GM13977 (cell line): ENCODE measurements at regions of chr14 and their contacts with region 1.

Region 1: GRCh38 chr14:22386924-22387775 is 201.9 kb downstream of the DAD1 start:
- DNase-seq: peak; percentile 67
- CTCF ChIP-seq: peak; percentile 81

Region 2: DNA sequence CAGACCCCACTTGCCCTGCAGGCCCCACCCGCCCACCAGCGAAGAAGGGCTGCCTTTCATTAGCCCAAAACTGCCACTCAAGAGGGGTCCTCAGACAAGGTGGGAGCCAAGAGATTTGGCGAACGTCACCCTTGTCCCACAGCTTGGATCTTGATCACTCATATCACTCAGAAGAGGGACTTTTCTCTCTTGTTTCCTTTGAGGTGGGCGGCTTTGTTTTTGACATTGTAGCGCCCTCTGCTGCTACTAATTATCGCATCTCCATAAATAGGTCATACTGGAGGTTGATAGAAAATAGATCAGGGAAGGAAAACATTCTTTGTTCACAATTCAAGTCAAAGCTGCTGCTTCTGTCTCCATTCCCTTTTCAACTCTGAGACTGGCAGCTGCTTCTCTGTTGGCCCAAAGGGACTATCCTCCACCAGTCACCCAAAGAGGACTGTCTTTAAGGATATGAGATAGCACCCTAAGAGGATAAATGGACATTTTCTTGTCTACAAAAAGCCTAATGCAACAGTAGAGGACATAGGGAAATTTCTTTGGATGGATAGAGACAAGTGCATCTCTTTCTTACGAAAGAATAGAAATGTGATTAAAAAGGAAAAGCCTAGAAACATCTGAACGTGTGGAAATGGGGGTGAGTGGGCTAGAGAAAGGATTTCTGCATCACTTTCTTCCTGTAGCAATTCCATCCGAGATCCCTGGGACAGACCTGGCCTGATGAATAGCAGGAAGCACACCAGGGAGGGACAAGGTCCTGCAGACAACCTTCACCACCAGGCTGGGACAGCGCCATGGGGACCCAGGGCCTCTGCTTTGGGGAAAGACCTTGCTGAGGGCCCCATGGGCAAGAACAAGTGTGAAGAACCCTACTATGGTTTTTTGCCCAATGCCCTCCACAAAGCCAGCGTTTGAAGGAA is 86.0 kb after region 1 on chr14:
- in situ Hi-C with region 1: loop called (anchors 5 kb)
- DNase-seq: peak; percentile 76
- CTCF ChIP-seq: peak; percentile 69

Region 3: GRCh38 chr14:22561661-22562579 is 174.8 kb after region 1 on chr14:
- in situ Hi-C with region 1: loop called (anchors 5 kb)
- DNase-seq: no peak
- CTCF ChIP-seq: no peak

Region 4: DNA sequence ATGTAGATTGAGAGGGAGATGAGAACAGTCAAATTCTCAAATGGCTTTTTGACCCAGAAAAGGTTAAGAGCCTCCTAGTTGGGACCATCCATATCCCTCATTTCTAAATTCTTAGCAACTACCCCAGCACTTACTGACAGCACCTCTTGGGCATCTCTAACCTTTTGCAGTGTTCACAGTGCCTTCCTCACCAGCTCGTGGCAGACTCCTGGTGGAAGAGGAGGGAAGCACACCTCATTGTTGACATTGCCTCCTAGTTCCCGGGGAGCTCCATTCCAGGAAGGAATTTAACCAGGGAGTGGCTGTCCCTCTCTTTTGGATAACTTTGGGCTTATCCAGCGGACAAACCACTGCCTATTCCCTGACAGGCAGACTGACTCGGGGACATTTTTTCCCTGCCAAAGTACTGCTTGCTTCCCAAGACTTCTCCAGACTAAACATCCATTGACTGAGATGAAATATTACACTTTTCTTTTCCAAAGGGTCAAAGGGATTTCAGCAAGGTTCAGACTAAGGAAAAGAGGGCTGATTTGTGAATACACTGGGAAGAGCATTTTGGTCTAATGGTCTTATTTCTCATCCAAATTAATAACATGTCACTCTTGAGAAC is 266.0 kb after region 1 on chr14:
- in situ Hi-C with region 1: loop called (anchors 10 kb)
- DNase-seq: peak; percentile 55
- CTCF ChIP-seq: peak; percentile 81

Region 5: GRCh38 chr14:22865424-22866405 is 478.6 kb after region 1 on chr14:
- in situ Hi-C with region 1: loop called (anchors 10 kb)
- DNase-seq: peak; percentile 15
- CTCF ChIP-seq: peak; percentile 44